CD8-positive, alpha-beta T cell (primary cell): ENCODE measurements at regions of chrX and their contacts with region 1.

Region 1: GRCh38 chrX:24081661-24082264 is 27.0 kb downstream of the EIF2S3 start:
- DNase-seq: peak; percentile 4 to 72 (median 43)
- ATAC-seq: peak; percentile 81
- H3K4me3 ChIP-seq: peak overlapping the region in 1 of 2 experiments; percentile 22
- H3K4me3 Mint-ChIP-seq: peak overlapping the region; percentile 26
- H3K27ac ChIP-seq: no peak overlapping the region
- H3K27ac Mint-ChIP-seq: no peak overlapping the region
- H3K4me1 ChIP-seq: no peaks in the 10 kb centered on the region
- H3K4me1 Mint-ChIP-seq: no peaks in the 10 kb centered on the region
- H3K27me3 ChIP-seq: no peaks in the 10 kb centered on the region
- H3K27me3 Mint-ChIP-seq: no peaks in the 10 kb centered on the region
- CTCF ChIP-seq: peak; percentile 33

Region 2: DNA sequence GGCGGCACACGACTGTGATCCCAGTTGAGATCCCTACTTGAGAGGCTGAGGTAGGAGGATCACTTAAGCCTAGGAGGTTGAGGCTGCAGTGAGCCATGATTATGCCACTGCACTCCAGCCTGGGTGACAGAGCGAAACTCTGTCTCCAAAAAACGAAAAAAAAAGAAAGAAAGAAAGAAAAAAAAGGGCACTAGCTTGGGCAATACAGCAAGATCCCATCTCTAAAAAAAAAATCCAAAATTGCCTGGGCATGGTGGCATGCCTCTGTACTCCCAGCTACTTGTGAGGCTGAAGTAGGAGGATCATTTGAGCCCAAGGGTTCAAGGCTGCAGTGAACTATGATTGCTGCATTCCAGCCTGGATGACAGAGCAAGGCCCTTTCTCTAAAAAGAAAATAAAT is 44.0 kb before region 1 on chrX:
- CTCF ChIA-PET with region 1: no interaction called
- POLR2A ChIA-PET with region 1: no interaction called
- intact Hi-C with region 1: no loop called
- DNase-seq: no peak
- ATAC-seq: no peak
- H3K4me3 ChIP-seq: no peak overlapping the region
- H3K4me3 Mint-ChIP-seq: no peak overlapping the region
- H3K27ac ChIP-seq: no peak overlapping the region
- H3K27ac Mint-ChIP-seq: no peak overlapping the region
- H3K4me1 ChIP-seq: no peaks in the 10 kb centered on the region
- H3K4me1 Mint-ChIP-seq: no peaks in the 10 kb centered on the region
- H3K27me3 ChIP-seq: no peaks in the 10 kb centered on the region
- H3K27me3 Mint-ChIP-seq: no peaks in the 10 kb centered on the region
- CTCF ChIP-seq: no peak

Region 3: GRCh38 chrX:24215272-24215671 is 133.5 kb after region 1 on chrX:
- CTCF ChIA-PET with region 1: no interaction called
- POLR2A ChIA-PET with region 1: no interaction called
- intact Hi-C with region 1: loop called in 1 of 2 experiments (anchors 10 kb)
- DNase-seq: no peak
- ATAC-seq: no peak
- H3K4me3 ChIP-seq: no peak overlapping the region
- H3K4me3 Mint-ChIP-seq: no peak overlapping the region
- H3K27ac ChIP-seq: no peak overlapping the region
- H3K27ac Mint-ChIP-seq: peak overlapping the region; percentile 62
- H3K4me1 ChIP-seq: no peaks in the 10 kb centered on the region
- H3K4me1 Mint-ChIP-seq: peaks cover 11% of the 10 kb centered on the region
- H3K27me3 ChIP-seq: no peaks in the 10 kb centered on the region
- H3K27me3 Mint-ChIP-seq: no peaks in the 10 kb centered on the region
- CTCF ChIP-seq: no peak

Region 4: GRCh38 chrX:24241822-24242648 is 160.3 kb after region 1 on chrX:
- CTCF ChIA-PET with region 1: interaction called, 10 read pairs
- POLR2A ChIA-PET with region 1: no interaction called
- intact Hi-C with region 1: loop called (anchors 1 kb)
- DNase-seq: peak in 2 of 9 experiments; percentile 37 to 53
- ATAC-seq: no peak
- H3K4me3 ChIP-seq: no peak overlapping the region
- H3K4me3 Mint-ChIP-seq: no peak overlapping the region
- H3K27ac ChIP-seq: no peak overlapping the region
- H3K27ac Mint-ChIP-seq: no peak overlapping the region
- H3K4me1 ChIP-seq: no peaks in the 10 kb centered on the region
- H3K4me1 Mint-ChIP-seq: no peaks in the 10 kb centered on the region
- H3K27me3 ChIP-seq: no peaks in the 10 kb centered on the region
- H3K27me3 Mint-ChIP-seq: no peaks in the 10 kb centered on the region
- CTCF ChIP-seq: no peak